ENCODE measurements at regions of chr10 and their contacts with region 1.

Region 1: DNA sequence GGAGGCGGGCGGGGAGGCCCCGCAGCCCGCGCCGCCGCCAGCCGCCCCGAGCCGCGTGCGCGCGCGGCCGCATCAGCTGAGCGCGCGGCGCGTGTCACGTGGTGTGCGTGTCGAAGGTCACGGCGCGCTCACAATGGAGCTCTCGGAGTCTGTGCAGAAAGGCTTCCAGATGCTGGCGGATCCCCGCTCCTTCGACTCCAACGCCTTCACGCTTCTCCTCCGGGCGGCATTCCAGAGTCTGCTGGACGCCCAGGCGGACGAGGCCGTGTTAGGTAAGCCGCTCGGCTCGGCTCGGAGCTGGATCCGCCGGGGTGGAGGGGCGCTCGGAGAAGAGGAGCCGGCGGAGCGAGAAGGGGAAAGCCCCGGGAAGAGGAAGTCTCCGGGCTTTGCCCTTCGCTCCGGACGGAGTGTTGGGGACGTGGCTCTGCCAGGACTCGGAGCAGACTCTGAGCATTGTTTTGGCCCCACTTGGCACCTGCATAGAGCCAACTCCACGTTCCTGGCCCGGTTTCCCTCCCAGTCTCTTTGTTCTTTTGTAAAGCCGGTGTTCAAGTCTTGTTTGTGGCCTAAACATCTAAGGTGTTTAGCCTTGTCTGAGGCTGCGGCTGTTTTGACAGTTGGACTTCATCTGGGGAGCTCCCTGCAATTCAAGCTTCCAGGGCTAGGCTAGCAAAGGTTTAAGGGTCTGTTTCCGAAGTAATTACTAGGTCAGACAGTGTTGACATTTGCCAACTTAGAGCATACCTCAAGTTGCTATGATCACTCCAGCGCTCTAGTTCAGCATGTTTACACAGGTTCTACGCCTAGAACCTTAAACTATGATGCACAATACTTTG is at the start of gene COMMD3:
- DNase-seq: peak; percentile 87
- H3K4me3 Mint-ChIP-seq: peak within 1 kb of the TSS; percentile 92
- H3K27ac Mint-ChIP-seq: peak within 1 kb of the TSS; percentile 92
- H3K4me1 Mint-ChIP-seq: peaks cover 37% of the 10 kb centered on the region
- H3K27me3 Mint-ChIP-seq: peaks cover 4% of the 10 kb centered on the region
- total RNA-seq, gene COMMD3: 84.6 to 91.4 TPM

Region 2: GRCh38 chr10:22022257-22023032 is 294.1 kb before region 1 on chr10:
- CTCF ChIA-PET with region 1: no interaction called
- POLR2A ChIA-PET with region 1: no interaction called
- intact Hi-C with region 1: loop called (anchors 5 kb)
- DNase-seq: peak; percentile 78
- H3K4me3 Mint-ChIP-seq: peak overlapping the region; percentile 57
- H3K27ac Mint-ChIP-seq: peak overlapping the region; percentile 80
- H3K4me1 Mint-ChIP-seq: peaks cover 21% of the 10 kb centered on the region
- H3K27me3 Mint-ChIP-seq: no peaks in the 10 kb centered on the region

Region 3: GRCh38 chr10:22228943-22229801 is 87.3 kb before region 1 on chr10:
- CTCF ChIA-PET with region 1: interaction called, 3 read pairs
- POLR2A ChIA-PET with region 1: interaction called, 10 read pairs
- intact Hi-C with region 1: loop called (anchors 1 kb)
- DNase-seq: peak; percentile 90
- H3K4me3 Mint-ChIP-seq: peak overlapping the region; percentile 77
- H3K27ac Mint-ChIP-seq: peak overlapping the region; percentile 96
- H3K4me1 Mint-ChIP-seq: peaks cover 16% of the 10 kb centered on the region
- H3K27me3 Mint-ChIP-seq: peaks cover 4% of the 10 kb centered on the region

Region 4: GRCh38 chr10:22340362-22341189 is 24.1 kb after region 1 on chr10:
- CTCF ChIA-PET with region 1: interaction called, 7 read pairs
- POLR2A ChIA-PET with region 1: interaction called, 13 read pairs
- intact Hi-C with region 1: loop called (anchors 2 kb)
- DNase-seq: peak; percentile 70
- H3K4me3 Mint-ChIP-seq: peak overlapping the region; percentile 83
- H3K27ac Mint-ChIP-seq: peak overlapping the region; percentile 87
- H3K4me1 Mint-ChIP-seq: peaks cover 25% of the 10 kb centered on the region
- H3K27me3 Mint-ChIP-seq: peaks cover 60% of the 10 kb centered on the region

Region 5: DNA sequence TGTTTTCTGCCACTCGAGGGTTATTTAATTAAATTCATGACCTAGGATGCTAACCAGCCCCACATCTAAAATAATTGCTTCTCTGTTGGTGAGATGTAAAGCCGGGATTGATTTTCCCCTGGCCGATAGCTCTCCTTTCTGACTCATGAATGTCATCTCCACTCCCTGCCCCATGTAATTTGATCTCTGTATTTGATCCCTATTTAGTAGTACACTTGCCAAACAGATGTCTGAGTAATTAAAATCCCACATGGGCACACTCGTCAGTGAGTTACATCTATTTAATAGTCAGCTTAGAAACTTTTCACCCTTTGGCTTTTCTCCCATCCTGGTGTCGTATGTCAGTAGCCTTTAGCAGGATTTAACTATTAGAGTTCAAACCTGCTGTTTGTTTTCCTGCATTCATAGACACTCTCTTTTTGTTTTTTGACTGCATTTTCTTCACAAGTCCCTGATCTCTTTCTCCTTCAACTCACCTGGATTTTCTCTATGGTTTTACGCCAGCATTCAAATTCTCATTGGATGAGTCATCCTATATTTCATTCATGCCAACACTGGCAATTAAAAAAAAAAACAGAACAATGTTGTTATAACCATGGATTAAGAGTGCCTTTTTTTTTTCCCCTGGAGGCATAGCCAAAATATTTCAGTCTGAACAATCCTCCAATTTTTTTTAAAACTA is 111.5 kb after region 1 on chr10:
- CTCF ChIA-PET with region 1: no interaction called
- POLR2A ChIA-PET with region 1: no interaction called
- intact Hi-C with region 1: no loop called
- DNase-seq: no peak
- H3K4me3 Mint-ChIP-seq: no peak overlapping the region
- H3K27ac Mint-ChIP-seq: no peak overlapping the region
- H3K4me1 Mint-ChIP-seq: peaks cover 2% of the 10 kb centered on the region
- H3K27me3 Mint-ChIP-seq: peaks cover 14% of the 10 kb centered on the region

Region 6: DNA sequence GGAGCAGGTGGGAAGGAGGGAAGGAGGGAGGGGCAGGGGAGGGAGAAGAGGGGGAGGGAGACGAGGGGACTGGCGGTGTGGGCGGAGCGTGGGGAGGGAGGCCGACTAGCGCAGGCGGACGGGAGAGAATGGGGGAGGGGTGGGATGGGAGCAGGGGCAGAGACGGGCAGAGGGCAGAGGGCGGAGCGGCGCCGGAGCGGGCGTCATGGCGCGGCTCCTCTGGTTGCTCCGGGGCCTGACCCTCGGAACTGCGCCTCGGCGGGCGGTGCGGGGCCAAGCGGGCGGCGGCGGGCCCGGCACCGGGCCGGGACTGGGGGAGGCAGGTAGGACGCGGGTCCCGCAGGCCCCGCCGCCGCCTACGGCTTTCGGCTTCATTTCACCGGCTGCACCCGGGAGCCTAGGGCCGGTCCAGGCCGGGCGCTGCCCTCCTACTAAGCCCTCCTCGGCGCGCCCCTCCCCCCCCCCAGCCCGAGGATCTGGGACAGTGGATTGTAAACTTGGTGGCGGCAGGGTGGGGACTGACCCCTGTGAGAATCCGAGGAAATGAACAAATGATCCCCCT is 779.0 kb after region 1 on chr10 and contains the start of gene MSRB2:
- CTCF ChIA-PET with region 1: no interaction called
- POLR2A ChIA-PET with region 1: no interaction called
- intact Hi-C with region 1: loop called (anchors 5 kb)
- DNase-seq: peak; percentile 87
- H3K4me3 Mint-ChIP-seq: peak within 1 kb of the TSS; percentile 94
- H3K27ac Mint-ChIP-seq: peak within 1 kb of the TSS; percentile 88
- H3K4me1 Mint-ChIP-seq: peaks cover 38% of the 10 kb centered on the region
- H3K27me3 Mint-ChIP-seq: no peaks in the 10 kb centered on the region
- total RNA-seq, gene MSRB2: 9.4 to 11.1 TPM

Measured in activated CD4-positive, alpha-beta memory T cell treated with anti-CD3 and anti-CD28 coated beads for 36 hours (primary cell).